ENCODE measurements at regions of chr7 and their contacts with region 1.

Region 1: GRCh38 chr7:149670288-149670687 is 103.1 kb downstream of the ZNF467 start:
- DNase-seq: peak; percentile 50 to 82 (median 67)
- H3K4me3 ChIP-seq: no peak overlapping the region
- H3K27ac ChIP-seq: no peak overlapping the region
- H3K4me1 ChIP-seq: peaks cover 0 to 9% of the 10 kb centered on the region in 2 donors
- H3K27me3 ChIP-seq: no peaks in the 10 kb centered on the region
- CTCF ChIP-seq: no peak
- POLR2A ChIP-seq: no peak

Region 2: DNA sequence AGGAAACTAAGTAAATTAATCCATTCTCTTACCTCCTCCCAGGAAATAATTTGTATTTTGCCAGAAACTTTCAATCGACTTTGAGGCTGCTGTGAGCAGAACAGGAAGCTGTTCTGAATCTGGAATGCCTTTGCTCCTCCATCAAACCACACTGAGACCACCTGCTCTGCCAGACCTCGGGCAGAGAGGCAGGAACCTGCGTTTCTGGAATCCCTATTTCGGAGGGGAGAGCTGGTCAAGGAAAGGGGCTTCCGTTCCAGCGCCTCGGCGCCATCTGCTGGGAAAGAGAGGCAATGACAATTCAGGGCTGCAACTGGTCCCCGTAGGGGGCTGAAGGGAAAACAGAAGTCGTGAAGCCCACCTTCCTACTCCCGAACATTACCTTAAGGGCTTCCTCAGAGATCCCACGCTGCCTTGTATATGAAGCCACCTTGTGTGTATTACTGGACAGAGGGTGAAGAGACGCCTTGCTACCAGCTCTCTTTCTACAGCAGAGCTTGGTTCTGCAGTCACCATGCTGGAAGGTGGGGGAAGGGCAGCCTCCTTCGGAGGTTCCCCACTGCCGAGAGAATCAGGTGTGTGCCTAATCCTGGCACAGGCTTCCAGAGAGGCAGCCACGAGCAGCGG is 71.9 kb after region 1 on chr7:
- intact Hi-C with region 1: loop called (anchors 5 kb)
- DNase-seq: peak; percentile 49 to 80 (median 66)
- H3K4me3 ChIP-seq: peak overlapping the region in 1 of 4 donors; percentile 0
- H3K27ac ChIP-seq: no peak overlapping the region
- H3K4me1 ChIP-seq: peaks cover 0 to 9% of the 10 kb centered on the region in 2 donors
- H3K27me3 ChIP-seq: no peaks in the 10 kb centered on the region
- CTCF ChIP-seq: peak; percentile 79 to 91 (median 88)
- POLR2A ChIP-seq: no peak

Region 3: GRCh38 chr7:149748076-149748874 is 78.0 kb after region 1 on chr7:
- intact Hi-C with region 1: loop called (anchors 5 kb)
- DNase-seq: no peak
- H3K4me3 ChIP-seq: no peak overlapping the region
- H3K27ac ChIP-seq: no peak overlapping the region
- H3K4me1 ChIP-seq: no peaks in the 10 kb centered on the region
- H3K27me3 ChIP-seq: no peaks in the 10 kb centered on the region
- CTCF ChIP-seq: no peak
- POLR2A ChIP-seq: no peak

Measured in adrenal gland (tissue), 19 donors.